Aorta (tissue), 5 donors: ENCODE measurements at regions of chr10 and their contacts with region 1.

Region 1: GRCh38 chr10:132396495-132397035 is 435 bp upstream of the PWWP2B start:
- DNase-seq: peak; percentile 75 to 90
- ATAC-seq: peak; percentile 34
- H3K4me3 ChIP-seq: peak overlapping the region; percentile 59 to 76
- H3K27ac ChIP-seq: peak overlapping the region in 1 of 2 donors; percentile 28
- H3K4me1 ChIP-seq: no peaks in the 10 kb centered on the region
- H3K27me3 ChIP-seq: no peaks in the 10 kb centered on the region

Region 2: DNA sequence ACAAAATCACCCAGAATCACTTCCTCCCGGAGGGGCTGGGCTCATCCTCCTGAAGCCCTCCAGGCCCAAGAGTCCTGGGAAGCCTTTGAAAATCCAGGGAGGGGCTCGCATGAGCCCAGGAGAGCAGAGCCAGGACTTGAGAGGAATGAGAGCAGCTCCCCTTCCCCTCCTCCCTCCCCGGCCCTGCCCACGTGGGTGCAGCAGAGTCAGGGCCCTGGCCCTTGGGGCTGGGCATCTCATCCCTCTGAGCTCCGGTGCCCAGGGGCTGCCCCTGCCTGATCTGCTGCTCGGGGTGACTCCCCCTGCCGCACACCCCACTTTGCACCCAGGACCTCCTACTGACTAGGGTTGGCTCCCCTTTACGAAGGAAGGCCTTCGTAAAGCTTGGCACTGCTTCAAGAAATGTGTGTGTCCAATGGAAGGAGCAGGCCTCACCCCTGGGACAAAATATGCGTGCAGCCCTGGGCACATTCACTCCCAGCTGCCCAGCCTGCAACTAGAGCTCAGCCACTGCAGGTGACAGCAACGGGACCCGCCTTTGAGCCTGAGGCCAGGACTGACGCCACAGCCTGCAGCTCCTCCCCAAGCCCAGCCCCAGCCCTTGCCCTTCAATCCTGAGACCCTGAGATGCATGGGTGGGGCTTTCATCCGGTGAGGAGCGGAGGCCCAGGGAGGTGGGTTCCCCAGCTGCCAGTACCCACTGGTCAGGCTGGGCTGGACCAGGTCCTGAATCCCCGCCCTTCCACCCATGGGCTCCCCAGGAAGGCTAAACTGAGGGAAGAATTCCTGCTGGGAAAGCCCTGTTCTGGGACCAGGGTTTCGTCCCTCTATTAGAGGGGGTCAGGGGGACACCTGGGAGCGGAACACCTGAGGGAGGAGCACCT is 22.2 kb after region 1 on chr10:
- intact Hi-C with region 1: loop called in 1 of 2 experiments (anchors 2 kb)
- DNase-seq: no peak
- ATAC-seq: no peak
- H3K4me3 ChIP-seq: no peak overlapping the region
- H3K27ac ChIP-seq: no peak overlapping the region
- H3K4me1 ChIP-seq: no peaks in the 10 kb centered on the region
- H3K27me3 ChIP-seq: no peaks in the 10 kb centered on the region

Region 3: GRCh38 chr10:132575356-132576201 is 179.0 kb after region 1 on chr10:
- intact Hi-C with region 1: no loop called
- DNase-seq: peak in 1 of 2 donors; percentile 82
- ATAC-seq: peak; percentile 65
- H3K4me3 ChIP-seq: no peak overlapping the region
- H3K27ac ChIP-seq: peak overlapping the region in 1 of 2 donors; percentile 75
- H3K4me1 ChIP-seq: peaks cover 0 to 4% of the 10 kb centered on the region in 2 donors
- H3K27me3 ChIP-seq: no peaks in the 10 kb centered on the region